ENCODE measurements at regions of chr1 and their contacts with region 1.

Region 1: GRCh38 chr1:1883092-1883873 is 7.6 kb downstream of the GNB1 start:
- DNase-seq: no peak
- H3K4me3 ChIP-seq: no peak overlapping the region
- H3K27ac ChIP-seq: peak overlapping the region; percentile 51
- H3K4me1 ChIP-seq: peaks cover 4% of the 10 kb centered on the region; the same call in 1 of the 2 replicates
- H3K27me3 ChIP-seq: no peaks in the 10 kb centered on the region
- CTCF ChIP-seq: no peak

Region 2: DNA sequence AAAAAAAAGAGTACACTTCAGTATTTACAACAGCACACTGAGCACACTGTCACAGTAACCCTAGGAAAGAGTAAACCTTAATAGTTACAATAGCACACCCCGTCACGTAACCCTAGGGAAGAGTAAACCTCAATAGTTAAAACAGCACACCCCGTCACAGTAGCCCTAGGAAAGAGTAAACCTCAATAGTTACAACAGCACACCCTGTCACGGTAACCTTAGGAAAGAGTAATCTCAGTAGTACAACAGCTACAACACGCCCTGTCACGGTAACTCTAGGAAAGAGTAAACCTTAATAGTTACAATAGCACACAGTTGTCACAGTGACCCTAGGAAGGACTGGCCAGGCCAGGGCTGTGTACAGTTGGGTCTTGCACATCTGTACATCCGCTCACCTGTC is 162.1 kb before region 1 on chr1:
- CTCF ChIA-PET with region 1: no interaction called
- POLR2A ChIA-PET with region 1: interaction called, 11 read pairs
- intact Hi-C with region 1: no loop called
- DNase-seq: no peak
- H3K4me3 ChIP-seq: no peak overlapping the region
- H3K27ac ChIP-seq: no peak overlapping the region
- H3K4me1 ChIP-seq: no peaks in the 10 kb centered on the region
- H3K27me3 ChIP-seq: no peaks in the 10 kb centered on the region
- CTCF ChIP-seq: no peak

Region 3: GRCh38 chr1:1779706-1780597 is 103.3 kb before region 1 on chr1:
- CTCF ChIA-PET with region 1: interaction called, 10 read pairs
- POLR2A ChIA-PET with region 1: no interaction called
- intact Hi-C with region 1: no loop called
- DNase-seq: peak; percentile 60 to 69
- H3K4me3 ChIP-seq: peak overlapping the region; percentile 93; the same call in 1 of the 2 replicates
- H3K27ac ChIP-seq: peak overlapping the region; percentile 87
- H3K4me1 ChIP-seq: peaks cover 69% of the 10 kb centered on the region
- H3K27me3 ChIP-seq: no peaks in the 10 kb centered on the region
- CTCF ChIP-seq: no peak

Region 4: GRCh38 chr1:1858382-1859086 is 24.7 kb before region 1 on chr1:
- CTCF ChIA-PET with region 1: interaction called, 10 read pairs
- POLR2A ChIA-PET with region 1: interaction called, 4 read pairs
- intact Hi-C with region 1: no loop called
- DNase-seq: peak in 1 of 2 experiments; percentile 28
- H3K4me3 ChIP-seq: no peak overlapping the region
- H3K27ac ChIP-seq: 0 out of 2 replicates have a peak overlapping the region, but pooled peaks have one; percentile 9
- H3K4me1 ChIP-seq: peaks cover 17% of the 10 kb centered on the region; the same call in 1 of the 2 replicates
- H3K27me3 ChIP-seq: no peaks in the 10 kb centered on the region
- CTCF ChIP-seq: no peak

Region 5: DNA sequence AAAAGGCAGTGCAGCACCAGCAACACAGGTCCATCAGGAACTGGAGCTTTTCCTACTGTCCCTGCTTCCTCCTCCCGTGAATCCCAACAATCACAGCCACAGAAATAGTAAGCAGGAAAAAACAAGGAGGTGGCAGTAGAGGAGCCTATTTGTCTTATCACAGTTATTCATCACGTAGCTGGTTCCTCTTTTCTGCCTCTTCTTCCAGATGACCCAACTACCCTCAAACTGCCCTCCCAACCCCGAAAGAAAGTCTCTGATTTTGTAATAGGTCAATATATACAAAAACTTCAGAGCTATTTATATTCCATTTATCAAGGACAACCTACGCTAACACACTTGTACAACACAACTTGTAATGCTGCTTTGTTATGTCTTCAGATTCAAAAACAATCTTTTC is 13.8 kb before region 1 on chr1:
- CTCF ChIA-PET with region 1: interaction called, 33 read pairs
- POLR2A ChIA-PET with region 1: interaction called, 21 read pairs
- intact Hi-C with region 1: no loop called
- DNase-seq: no peak
- H3K4me3 ChIP-seq: no peak overlapping the region
- H3K27ac ChIP-seq: no peak overlapping the region
- H3K4me1 ChIP-seq: no peaks in the 10 kb centered on the region
- H3K27me3 ChIP-seq: no peaks in the 10 kb centered on the region
- CTCF ChIP-seq: no peak

Region 6: GRCh38 chr1:2795926-2796325 is 912.6 kb after region 1 on chr1:
- CTCF ChIA-PET with region 1: no interaction called
- POLR2A ChIA-PET with region 1: interaction called, 12 read pairs
- intact Hi-C with region 1: no loop called
- DNase-seq: no peak
- H3K4me3 ChIP-seq: no peak overlapping the region
- H3K27ac ChIP-seq: no peak overlapping the region
- H3K4me1 ChIP-seq: no peaks in the 10 kb centered on the region
- H3K27me3 ChIP-seq: peaks cover 13% of the 10 kb centered on the region; the same call in 1 of the 2 replicates
- CTCF ChIP-seq: no peak

Measured in PC-9 (cell line).